ENCODE measurements at regions of chr12 and their contacts with region 1.

Region 1: DNA sequence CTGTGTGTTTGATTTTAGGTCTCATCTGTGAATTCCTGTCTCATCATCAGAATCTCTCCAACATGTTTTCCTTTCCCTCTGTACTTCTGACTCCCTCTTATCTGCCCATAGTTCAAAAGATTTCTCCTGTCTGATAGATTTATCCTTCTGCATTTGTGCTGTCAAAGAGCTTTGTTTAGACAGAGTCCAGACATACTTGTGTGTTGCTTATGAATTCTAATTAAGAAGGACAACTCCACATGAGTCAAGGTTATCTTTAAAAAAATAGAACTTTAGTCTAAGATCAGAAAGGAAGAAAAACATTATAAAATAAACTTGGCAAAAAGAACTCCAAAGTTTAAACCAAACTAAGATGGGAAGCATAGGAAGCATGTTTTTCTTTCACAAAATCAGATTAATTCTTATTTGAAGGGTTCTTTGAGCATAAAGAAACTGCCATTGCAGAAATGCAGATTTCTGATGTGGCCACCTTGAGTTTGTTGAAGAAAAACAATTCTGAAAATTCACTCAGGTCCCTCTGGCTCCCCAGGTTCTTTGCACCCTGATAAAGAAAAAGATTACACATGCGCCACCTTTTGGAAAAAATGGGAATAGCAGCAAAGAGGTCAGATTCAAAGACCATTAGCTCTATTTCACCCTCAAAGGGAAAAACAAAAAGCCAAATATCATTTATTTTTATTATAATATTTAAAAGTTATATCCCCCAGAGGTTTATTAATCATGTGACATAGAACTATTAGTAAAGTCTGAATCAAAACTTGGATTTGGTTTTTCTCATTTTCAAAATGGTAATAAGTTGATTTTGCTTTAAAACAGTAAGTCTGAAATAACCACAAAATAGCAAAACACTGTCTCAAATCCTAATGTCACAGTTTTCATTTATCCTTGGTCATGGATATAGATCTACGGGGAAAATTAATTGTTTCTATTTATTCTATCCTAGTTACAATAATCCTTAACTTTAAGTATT is 143.7 kb upstream of the DCN start:
- DNase-seq: peak in 7 of 9 experiments; percentile 0 to 53 (median 21)
- ATAC-seq: no peak
- H3K4me3 ChIP-seq: no peak overlapping the region
- H3K4me3 Mint-ChIP-seq: no peak overlapping the region
- H3K27ac ChIP-seq: no peak overlapping the region
- H3K27ac Mint-ChIP-seq: no peak overlapping the region
- H3K4me1 ChIP-seq: no peaks in the 10 kb centered on the region
- H3K4me1 Mint-ChIP-seq: no peaks in the 10 kb centered on the region
- H3K27me3 ChIP-seq: no peaks in the 10 kb centered on the region
- H3K27me3 Mint-ChIP-seq: peaks cover 6% of the 10 kb centered on the region
- CTCF ChIP-seq: peak; percentile 89

Region 2: GRCh38 chr12:90978117-90978770 is 348.1 kb before region 1 on chr12:
- CTCF ChIA-PET with region 1: no interaction called
- POLR2A ChIA-PET with region 1: no interaction called
- intact Hi-C with region 1: loop called (anchors 5 to 10 kb)
- DNase-seq: peak in 2 of 9 experiments; percentile 4 to 18
- ATAC-seq: no peak
- H3K4me3 ChIP-seq: no peak overlapping the region
- H3K4me3 Mint-ChIP-seq: no peak overlapping the region
- H3K27ac ChIP-seq: no peak overlapping the region
- H3K27ac Mint-ChIP-seq: no peak overlapping the region
- H3K4me1 ChIP-seq: no peaks in the 10 kb centered on the region
- H3K4me1 Mint-ChIP-seq: no peaks in the 10 kb centered on the region
- H3K27me3 ChIP-seq: no peaks in the 10 kb centered on the region
- H3K27me3 Mint-ChIP-seq: no peaks in the 10 kb centered on the region
- CTCF ChIP-seq: no peak

Region 3: DNA sequence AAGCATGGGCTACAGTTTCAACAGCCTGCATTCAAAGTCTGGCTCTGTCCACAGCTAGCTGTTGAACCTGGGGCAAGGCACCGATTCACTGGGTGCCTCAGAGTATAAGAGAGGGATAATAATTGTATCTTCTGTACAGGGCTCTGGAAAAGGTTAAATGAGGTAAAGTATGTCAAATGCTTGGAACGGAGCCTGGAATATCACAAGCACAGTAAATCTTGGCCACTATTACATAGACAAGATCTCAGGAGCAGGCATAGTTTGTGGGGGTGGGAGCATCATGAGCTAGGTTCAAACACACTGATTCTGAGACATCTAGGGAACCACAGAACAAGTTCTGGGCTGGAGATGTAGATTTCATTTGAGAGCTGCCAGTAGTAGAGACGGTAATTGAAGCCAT is 1847.7 kb after region 1 on chr12:
- CTCF ChIA-PET with region 1: no interaction called
- POLR2A ChIA-PET with region 1: no interaction called
- intact Hi-C with region 1: loop called in 1 of 2 experiments (anchors 10 kb)
- DNase-seq: no peak
- ATAC-seq: no peak
- H3K4me3 ChIP-seq: no peak overlapping the region
- H3K4me3 Mint-ChIP-seq: no peak overlapping the region
- H3K27ac ChIP-seq: no peak overlapping the region
- H3K27ac Mint-ChIP-seq: no peak overlapping the region
- H3K4me1 ChIP-seq: no peaks in the 10 kb centered on the region
- H3K4me1 Mint-ChIP-seq: no peaks in the 10 kb centered on the region
- H3K27me3 ChIP-seq: peaks cover 0 to 3% of the 10 kb centered on the region in 2 experiments
- H3K27me3 Mint-ChIP-seq: no peaks in the 10 kb centered on the region
- CTCF ChIP-seq: no peak

Measured in CD8-positive, alpha-beta T cell (primary cell).